ENCODE measurements at regions of chr17 and their contacts with region 1.

Region 1: GRCh38 chr17:21511363-21512198 is 135.4 kb downstream of the KCNJ12 start:
- DNase-seq: peak; percentile 67
- H3K4me3 Mint-ChIP-seq: peak overlapping the region; percentile 52
- H3K27ac Mint-ChIP-seq: no peak overlapping the region
- H3K4me1 Mint-ChIP-seq: peaks cover 17% of the 10 kb centered on the region
- H3K27me3 Mint-ChIP-seq: peaks cover 41% of the 10 kb centered on the region

Region 2: GRCh38 chr17:21119247-21119918 is 392.2 kb before region 1 on chr17:
- CTCF ChIA-PET with region 1: interaction called, 25 read pairs
- POLR2A ChIA-PET with region 1: no interaction called
- DNase-seq: peak; percentile 76
- H3K4me3 Mint-ChIP-seq: no peak overlapping the region
- H3K27ac Mint-ChIP-seq: no peak overlapping the region
- H3K4me1 Mint-ChIP-seq: peaks cover 10% of the 10 kb centered on the region
- H3K27me3 Mint-ChIP-seq: peaks cover 4% of the 10 kb centered on the region

Region 3: GRCh38 chr17:21126645-21127510 is 384.7 kb before region 1 on chr17 and contains the start of gene DHRS7B:
- CTCF ChIA-PET with region 1: interaction called, 15 read pairs
- POLR2A ChIA-PET with region 1: no interaction called
- DNase-seq: peak; percentile 97
- H3K4me3 Mint-ChIP-seq: peak within 1 kb of the TSS; percentile 89
- H3K27ac Mint-ChIP-seq: peak within 1 kb of the TSS; percentile 86
- H3K4me1 Mint-ChIP-seq: peaks cover 35% of the 10 kb centered on the region
- H3K27me3 Mint-ChIP-seq: no peaks in the 10 kb centered on the region
- total RNA-seq, gene DHRS7B: 12.1 to 15.3 TPM

Region 4: GRCh38 chr17:21275579-21276263 is 235.9 kb before region 1 on chr17:
- CTCF ChIA-PET with region 1: interaction called, 34 read pairs
- POLR2A ChIA-PET with region 1: interaction called, 3 read pairs
- DNase-seq: peak; percentile 94
- H3K4me3 Mint-ChIP-seq: peak overlapping the region; percentile 72
- H3K27ac Mint-ChIP-seq: peak overlapping the region; percentile 50
- H3K4me1 Mint-ChIP-seq: peaks cover 43% of the 10 kb centered on the region
- H3K27me3 Mint-ChIP-seq: no peaks in the 10 kb centered on the region

Region 5: DNA sequence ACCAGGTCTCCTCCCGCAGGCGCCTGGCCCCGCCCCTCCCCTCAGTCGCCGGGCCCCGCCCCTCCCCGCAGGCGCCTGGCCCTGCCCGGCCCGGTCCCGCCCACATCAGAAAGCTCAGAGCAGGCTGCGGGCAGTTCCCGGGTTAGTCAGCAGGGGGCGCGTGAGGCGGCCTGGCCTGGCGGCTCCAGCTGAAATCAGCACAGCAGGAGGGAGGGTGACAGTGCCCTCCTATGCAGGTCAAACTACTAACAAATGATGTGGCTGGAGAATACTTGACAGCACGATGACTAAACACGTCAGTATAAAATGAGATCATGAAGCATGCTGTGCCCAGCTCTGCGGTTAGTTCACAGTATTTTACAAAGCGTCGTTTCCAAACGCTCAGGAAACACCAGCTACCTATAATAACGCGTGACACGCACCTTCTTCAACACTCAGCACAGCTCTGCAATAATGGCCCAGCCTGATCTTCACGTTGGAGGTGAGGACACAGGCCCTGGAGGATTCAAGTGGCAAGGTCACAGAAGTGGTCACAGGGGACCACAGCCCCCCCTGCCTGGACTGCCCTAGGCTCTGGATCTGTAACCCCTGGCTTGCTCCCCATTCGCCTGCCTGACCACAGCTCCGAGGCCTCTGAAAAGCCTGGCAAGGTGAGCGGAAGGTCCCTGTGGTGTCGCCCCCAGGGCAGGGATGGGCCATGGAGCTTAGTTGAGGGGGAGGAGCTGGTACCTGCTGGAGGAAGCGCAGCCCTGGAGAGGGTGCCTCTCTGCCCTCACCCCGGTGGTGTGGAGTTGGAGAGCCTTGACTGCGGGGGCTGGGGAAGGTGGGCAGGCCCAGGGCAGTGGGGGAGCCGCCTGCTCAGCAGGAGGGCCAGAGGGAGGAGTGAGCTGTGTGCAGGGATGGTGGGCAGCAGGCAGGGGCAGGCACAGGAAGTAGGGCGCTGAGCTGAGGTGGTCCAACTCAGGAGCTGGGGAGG is 54.2 kb before region 1 on chr17:
- CTCF ChIA-PET with region 1: interaction called, 62 read pairs
- POLR2A ChIA-PET with region 1: no interaction called
- DNase-seq: peak; percentile 93
- H3K4me3 Mint-ChIP-seq: peak overlapping the region; percentile 19
- H3K27ac Mint-ChIP-seq: peak overlapping the region; percentile 62
- H3K4me1 Mint-ChIP-seq: peaks cover 29% of the 10 kb centered on the region
- H3K27me3 Mint-ChIP-seq: peaks cover 21% of the 10 kb centered on the region